ENCODE measurements at regions of chr15 and their contacts with region 1.

Region 1: DNA sequence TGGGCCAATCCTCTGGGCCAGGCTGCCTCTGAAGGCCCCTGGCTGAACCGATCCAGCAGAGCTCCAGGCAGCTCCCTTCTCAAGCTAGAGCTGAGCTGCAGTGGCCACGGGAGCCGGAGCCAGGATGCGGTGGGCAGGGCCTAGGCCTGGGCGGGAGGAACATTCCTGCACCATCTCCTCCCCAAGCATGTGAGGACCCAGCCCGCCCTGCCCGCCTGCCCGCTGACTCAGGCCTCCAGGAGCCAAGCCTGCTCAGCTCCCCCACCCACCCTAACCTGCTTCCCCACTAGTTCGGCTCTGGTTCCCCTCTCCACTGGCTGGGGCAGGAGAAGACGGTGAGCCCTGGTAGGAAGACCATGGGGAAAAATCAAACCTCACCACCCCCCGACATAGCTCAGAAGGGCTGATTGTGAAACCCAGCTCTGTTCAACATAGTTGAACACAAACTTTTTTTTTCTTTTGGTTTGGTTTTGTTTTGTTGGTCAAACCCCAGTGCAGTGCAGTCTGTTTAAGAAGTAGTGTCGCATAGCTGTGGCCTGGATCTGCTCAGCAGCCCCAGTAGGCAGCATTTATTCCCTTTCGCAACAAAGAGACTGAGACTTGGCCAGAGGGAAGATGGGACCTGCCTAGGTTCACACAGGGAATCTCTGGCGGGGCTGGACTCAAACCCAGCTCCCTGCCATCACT is 13.5 kb downstream of the SNX33 start:
- DNase-seq: no peak
- H3K4me3 ChIP-seq: no peak overlapping the region
- H3K27ac ChIP-seq: peak overlapping the region; percentile 77 to 96
- H3K4me1 ChIP-seq: peaks cover 20 to 34% of the 10 kb centered on the region in 2 experiments; a peak in 3 of 4 replicates
- H3K27me3 ChIP-seq: no peaks in the 10 kb centered on the region
- CTCF ChIP-seq: no peak
- EP300 ChIP-seq: 0 out of 4 replicates have a peak, but pooled peaks of 1 of the 2 experiments have one; percentile 28
- RAD21 ChIP-seq: no peak

Region 2: GRCh38 chr15:75647370-75648155 is 13.7 kb before region 1 on chr15 and contains the start of gene SNX33:
- CTCF ChIA-PET with region 1: interaction called, 22 read pairs
- POLR2A ChIA-PET with region 1: interaction called, 6 read pairs
- DNase-seq: peak; percentile 94
- H3K4me3 ChIP-seq: peak within 1 kb of the TSS; percentile 73 to 98
- H3K27ac ChIP-seq: peak within 1 kb of the TSS; percentile 81 to 96
- H3K4me1 ChIP-seq: peaks cover 13 to 45% of the 10 kb centered on the region in 2 experiments; a peak in 3 of 4 replicates
- H3K27me3 ChIP-seq: no peaks in the 10 kb centered on the region
- CTCF ChIP-seq: peak; percentile 65
- EP300 ChIP-seq: no peak
- RAD21 ChIP-seq: peak; percentile 4; the same call in 1 of the 2 replicates
- polyA plus RNA-seq, gene SNX33: 7.7 and 8.5 TPM in 2 replicates

Region 3: DNA sequence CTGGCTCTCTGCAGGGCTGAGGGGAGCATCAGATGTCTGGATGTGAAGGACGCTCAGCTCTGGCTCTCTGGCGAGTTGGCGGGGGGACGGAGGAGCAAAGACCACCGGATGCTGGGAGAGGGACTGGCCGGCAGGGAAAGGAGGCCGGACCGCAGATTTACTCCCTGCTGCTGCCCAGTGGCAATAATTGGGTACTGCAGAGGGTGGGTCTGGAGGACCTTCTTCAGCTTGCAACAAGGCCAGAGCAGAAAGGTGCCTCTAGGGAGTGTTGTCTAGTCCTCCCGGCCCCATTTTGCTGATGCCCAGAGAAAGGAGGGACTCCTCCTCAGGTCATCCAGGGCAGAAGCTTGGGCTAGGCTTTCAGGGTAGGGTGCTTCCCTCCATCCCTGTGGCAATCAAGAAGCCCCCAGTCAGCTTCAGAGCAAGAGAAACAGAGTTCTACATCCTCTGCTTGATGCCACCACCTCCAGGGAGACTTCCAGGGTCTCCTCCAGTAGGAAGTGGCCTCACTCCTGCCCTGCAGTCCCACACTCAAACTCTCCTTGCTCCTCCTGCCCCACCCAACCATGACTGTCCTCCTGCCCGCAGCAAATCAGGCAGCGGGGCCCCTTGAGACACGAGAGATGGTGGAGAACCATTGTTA is 71.7 kb after region 1 on chr15:
- CTCF ChIA-PET with region 1: no interaction called
- POLR2A ChIA-PET with region 1: no interaction called
- DNase-seq: peak; percentile 90
- H3K4me3 ChIP-seq: no peak overlapping the region
- H3K27ac ChIP-seq: no peak overlapping the region; a peak in 1 of 4 replicates
- H3K4me1 ChIP-seq: peaks cover 0 to 7% of the 10 kb centered on the region in 2 experiments; a peak in 1 of 4 replicates
- H3K27me3 ChIP-seq: no peaks in the 10 kb centered on the region
- CTCF ChIP-seq: peak; percentile 70
- EP300 ChIP-seq: no peak
- RAD21 ChIP-seq: peak; percentile 70